ENCODE measurements at regions of chr12 and their contacts with region 1.

Region 1: DNA sequence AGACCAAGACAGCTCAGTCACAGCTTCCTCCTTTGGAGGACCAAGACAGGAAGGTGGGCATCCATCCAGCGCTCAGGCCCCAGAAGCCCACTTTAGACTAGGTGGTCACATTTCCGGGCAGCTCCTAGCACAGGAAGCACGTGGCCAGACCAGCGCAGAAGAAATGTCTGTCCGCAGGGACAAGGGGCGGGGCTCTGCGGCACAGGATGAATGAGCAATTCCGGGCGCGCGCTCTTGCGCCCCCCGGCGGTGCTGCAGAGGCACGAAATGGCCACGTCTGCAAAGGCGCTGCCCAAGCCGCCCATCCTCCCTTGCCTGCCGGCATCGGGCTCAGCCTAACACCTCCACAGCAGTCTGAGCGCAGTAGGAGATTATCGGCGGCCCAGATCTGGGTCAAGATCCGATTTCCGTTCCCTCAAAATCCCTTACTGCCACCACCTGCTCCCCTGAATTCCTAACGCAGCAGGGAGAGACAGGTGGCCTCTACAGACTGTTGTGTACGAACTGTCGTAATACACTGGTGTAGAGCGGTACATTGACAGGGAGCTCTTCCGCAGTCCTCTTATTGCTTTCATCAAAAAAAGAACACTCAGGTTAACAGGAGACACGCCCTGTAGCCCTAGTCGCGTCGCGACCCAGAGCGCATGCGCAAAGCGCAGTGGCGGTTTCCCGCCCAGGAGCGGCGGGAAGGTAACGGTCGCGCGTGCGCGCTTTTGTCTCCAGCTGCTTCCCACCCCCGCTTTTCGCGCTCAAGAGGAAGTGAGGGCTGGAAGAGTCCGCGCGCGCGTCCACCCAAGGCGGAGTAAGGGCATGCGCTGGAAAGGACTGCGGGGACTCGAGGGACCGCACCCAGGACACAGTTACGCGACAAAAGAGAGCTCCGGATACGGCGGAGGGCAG is 794 bp downstream of the TUBA1B start:
- DNase-seq: peak; percentile 78
- ATAC-seq: peak; percentile 63
- H3K4me3 ChIP-seq: peak overlapping the region; percentile 97
- H3K27ac ChIP-seq: peak overlapping the region; percentile 99
- H3K4me1 ChIP-seq: peaks cover 12 to 37% of the 10 kb centered on the region in 2 experiments; a peak in 3 of 4 replicates
- H3K27me3 ChIP-seq: no peaks in the 10 kb centered on the region
- CTCF ChIP-seq: peak; percentile 62 to 94 (median 89)
- POLR2A ChIP-seq: no peak
- RAD21 ChIP-seq: peak; percentile 46; the same call in 1 of the 2 replicates

Region 2: DNA sequence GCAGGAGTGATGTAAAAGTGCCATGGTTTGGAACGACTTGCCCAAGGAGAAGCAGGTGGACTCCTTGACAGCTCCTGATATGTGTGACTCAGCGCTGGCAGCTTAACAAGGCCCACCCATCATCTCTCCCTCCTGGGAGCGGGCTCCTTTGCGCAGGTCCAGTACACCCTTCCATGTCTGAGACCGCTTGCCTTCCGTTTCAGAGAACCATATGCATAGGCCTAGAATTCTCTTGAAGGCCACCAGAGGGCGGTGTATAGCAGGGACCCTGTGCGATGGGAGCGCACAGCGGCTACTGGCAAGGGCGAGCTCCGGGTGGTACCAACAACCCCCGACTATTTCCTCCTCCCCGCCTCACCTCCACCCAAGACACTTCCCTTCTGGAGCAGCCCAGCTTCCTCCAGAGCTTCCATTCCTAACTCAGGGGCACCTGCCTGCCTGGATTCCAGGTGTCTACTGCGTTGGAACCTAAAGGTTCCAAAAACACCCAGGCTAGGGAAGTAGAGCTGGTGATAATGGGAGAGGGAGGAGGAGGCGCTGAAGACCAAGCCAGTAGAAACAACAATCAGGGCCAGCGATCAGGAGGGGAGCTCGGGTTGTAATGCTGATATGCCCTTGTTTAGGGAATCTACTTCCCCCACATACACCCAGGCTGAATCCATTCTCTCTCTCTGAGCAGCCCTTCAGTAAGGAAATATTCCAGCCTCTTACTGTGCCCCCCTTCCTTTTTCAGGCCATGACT is 42.0 kb before region 1 on chr12:
- CTCF ChIA-PET with region 1: interaction called, 21 read pairs
- POLR2A ChIA-PET with region 1: interaction called, 19 read pairs
- RAD21 ChIA-PET with region 1: no interaction called
- intact Hi-C with region 1: loop called (anchors 1 kb)
- DNase-seq: peak; percentile 94
- ATAC-seq: peak; percentile 99
- H3K4me3 ChIP-seq: peak overlapping the region; percentile 7 to 33; a peak in 2 of 4 replicates
- H3K27ac ChIP-seq: no peak overlapping the region
- H3K4me1 ChIP-seq: peaks cover 11 to 16% of the 10 kb centered on the region in 2 experiments
- H3K27me3 ChIP-seq: no peaks in the 10 kb centered on the region
- CTCF ChIP-seq: peak; percentile 83 to 92 (median 89)
- POLR2A ChIP-seq: no peak
- RAD21 ChIP-seq: peak; percentile 76

Region 3: GRCh38 chr12:49144384-49144783 is 14.0 kb after region 1 on chr12:
- CTCF ChIA-PET with region 1: no interaction called
- POLR2A ChIA-PET with region 1: interaction called, 17 read pairs
- RAD21 ChIA-PET with region 1: no interaction called
- intact Hi-C with region 1: no loop called
- DNase-seq: no peak
- ATAC-seq: no peak
- H3K4me3 ChIP-seq: no peak overlapping the region
- H3K27ac ChIP-seq: no peak overlapping the region
- H3K4me1 ChIP-seq: no peaks in the 10 kb centered on the region
- H3K27me3 ChIP-seq: no peaks in the 10 kb centered on the region
- CTCF ChIP-seq: no peak
- POLR2A ChIP-seq: no peak
- RAD21 ChIP-seq: no peak

Region 4: GRCh38 chr12:49219417-49220026 is 89.1 kb after region 1 on chr12:
- CTCF ChIA-PET with region 1: no interaction called
- POLR2A ChIA-PET with region 1: interaction called, 15 read pairs
- RAD21 ChIA-PET with region 1: no interaction called
- intact Hi-C with region 1: no loop called
- DNase-seq: no peak
- ATAC-seq: peak; percentile 58; the same call in 1 of the 2 replicates
- H3K4me3 ChIP-seq: no peak overlapping the region
- H3K27ac ChIP-seq: no peak overlapping the region
- H3K4me1 ChIP-seq: peaks cover 5 to 17% of the 10 kb centered on the region in 2 experiments; a peak in 2 of 4 replicates
- H3K27me3 ChIP-seq: no peaks in the 10 kb centered on the region
- CTCF ChIP-seq: no peak
- POLR2A ChIP-seq: no peak
- RAD21 ChIP-seq: no peak

Region 5: DNA sequence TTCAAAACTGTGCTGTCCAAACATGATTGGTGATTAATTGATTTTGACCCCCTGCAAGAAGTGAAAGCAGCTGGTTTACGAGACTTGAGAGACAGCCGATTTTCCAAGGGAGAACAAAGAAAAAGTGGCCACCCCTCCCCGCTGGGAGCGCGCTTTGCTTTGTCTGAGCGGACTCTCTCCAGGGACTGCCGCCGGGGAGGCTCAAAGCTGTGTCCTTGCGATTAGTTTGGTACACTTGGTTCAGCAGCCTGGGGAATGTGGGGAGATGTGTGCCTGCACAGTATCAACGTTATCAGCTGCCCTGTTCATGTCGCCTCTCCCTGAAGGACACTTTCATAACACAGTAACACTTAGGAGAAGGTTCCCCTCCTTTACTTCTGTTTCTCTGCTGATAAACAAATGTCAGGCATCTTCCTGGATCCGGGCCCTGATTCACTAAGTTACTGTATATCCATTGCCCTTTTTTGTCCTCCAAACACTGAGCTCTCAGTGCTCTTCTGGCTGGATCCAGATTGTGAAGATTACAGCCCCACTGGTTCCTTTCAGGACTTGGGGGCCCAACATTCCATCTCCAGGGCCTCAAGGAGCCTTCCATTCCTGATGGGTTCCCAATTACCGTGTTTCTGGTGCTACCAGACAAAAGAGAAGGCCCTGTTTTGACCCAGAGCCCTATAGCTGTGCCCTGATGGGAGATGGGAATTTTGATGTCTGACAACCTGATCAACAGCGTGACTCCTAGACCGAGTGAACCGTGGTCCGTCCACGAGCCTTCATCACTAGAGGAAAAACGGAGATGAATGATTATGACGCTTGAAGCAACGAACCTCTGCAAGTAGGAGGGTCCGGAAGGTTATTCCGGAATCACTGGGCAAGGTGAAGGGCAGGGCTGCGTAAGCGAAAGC is 102.8 kb after region 1 on chr12:
- CTCF ChIA-PET with region 1: interaction called, 16 read pairs
- POLR2A ChIA-PET with region 1: interaction called, 6 read pairs
- RAD21 ChIA-PET with region 1: no interaction called
- intact Hi-C with region 1: loop called (anchors 10 kb)
- DNase-seq: no peak
- ATAC-seq: no peak
- H3K4me3 ChIP-seq: no peak overlapping the region
- H3K27ac ChIP-seq: no peak overlapping the region
- H3K4me1 ChIP-seq: peaks cover 4 to 17% of the 10 kb centered on the region in 2 experiments; a peak in 3 of 4 replicates
- H3K27me3 ChIP-seq: no peaks in the 10 kb centered on the region
- CTCF ChIP-seq: no peak
- POLR2A ChIP-seq: no peak
- RAD21 ChIP-seq: no peak

Region 6: GRCh38 chr12:49489720-49490119 is 359.3 kb after region 1 on chr12:
- CTCF ChIA-PET with region 1: no interaction called
- POLR2A ChIA-PET with region 1: no interaction called
- RAD21 ChIA-PET with region 1: no interaction called
- intact Hi-C with region 1: no loop called
- DNase-seq: peak; percentile 70
- ATAC-seq: peak; percentile 48
- H3K4me3 ChIP-seq: 0 out of 4 replicates have a peak overlapping the region, but pooled peaks of 1 of the 2 experiments have one; percentile 1
- H3K27ac ChIP-seq: peak overlapping the region; percentile 87
- H3K4me1 ChIP-seq: peaks cover 64 to 67% of the 10 kb centered on the region in 2 experiments
- H3K27me3 ChIP-seq: no peaks in the 10 kb centered on the region
- CTCF ChIP-seq: no peak
- POLR2A ChIP-seq: no peak
- RAD21 ChIP-seq: peak; percentile 28; the same call in 1 of the 2 replicates